ENCODE measurements at regions of chr17 and their contacts with region 1.

Region 1: DNA sequence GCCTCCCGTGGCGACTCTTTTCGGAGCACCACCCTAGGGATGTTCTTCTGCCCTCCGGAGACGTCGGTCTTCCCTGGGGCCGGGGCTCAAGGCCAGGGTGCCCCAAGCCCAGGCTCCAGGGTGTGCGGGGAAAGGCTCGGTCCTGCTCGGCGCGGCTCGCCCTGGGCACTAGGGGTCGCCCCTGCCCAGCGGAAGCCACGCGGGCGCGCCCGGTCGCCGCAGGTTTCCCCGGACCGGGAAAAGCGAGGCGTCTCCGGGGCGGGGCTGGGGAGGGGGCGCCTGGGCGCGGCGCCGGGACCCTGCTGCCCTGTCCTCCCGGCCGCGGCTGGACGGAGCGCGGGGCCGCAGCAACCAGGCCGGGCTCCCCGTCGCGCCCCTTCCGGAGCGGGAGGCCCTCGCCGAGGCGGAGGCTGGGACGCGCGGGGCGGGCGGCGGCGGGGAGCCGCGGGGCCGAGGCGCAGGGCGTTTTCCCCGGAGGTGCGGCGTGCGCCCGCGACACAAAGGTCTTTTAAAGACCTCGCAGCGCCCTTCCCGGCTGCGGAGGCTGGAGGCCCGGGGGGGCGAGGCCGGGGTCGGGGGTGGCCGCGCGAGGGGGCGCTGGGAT is 76.4 kb downstream of the MRC2 start:
- DNase-seq: peak; percentile 60 to 98 (median 79)
- ATAC-seq: peak; percentile 96
- H3K4me3 ChIP-seq: peak overlapping the region; percentile 62
- H3K27ac ChIP-seq: peak overlapping the region; percentile 71 to 73
- H3K4me1 ChIP-seq: peaks cover 18 to 21% of the 10 kb centered on the region in 2 donors
- H3K27me3 ChIP-seq: peaks cover 0 to 17% of the 10 kb centered on the region in 2 donors
- CTCF ChIP-seq: peak; percentile 84 to 88

Region 2: GRCh38 chr17:62968445-62968923 is 264.6 kb after region 1 on chr17:
- intact Hi-C with region 1: loop called in 1 of 2 experiments (anchors 2 kb)
- DNase-seq: peak in 2 of 4 donors; percentile 61 to 82
- ATAC-seq: peak; percentile 81
- H3K4me3 ChIP-seq: peak overlapping the region; percentile 81 to 83
- H3K27ac ChIP-seq: peak overlapping the region in 1 of 2 donors; percentile 22
- H3K4me1 ChIP-seq: peaks cover 6 to 40% of the 10 kb centered on the region in 2 donors
- H3K27me3 ChIP-seq: no peaks in the 10 kb centered on the region
- CTCF ChIP-seq: peak; percentile 72 to 88

Measured in left lung (tissue), 14 donors.